ENCODE measurements at regions of chr7 and their contacts with region 1.

Region 1: GRCh38 chr7:42940985-42941847 is 9.0 kb downstream of the MRPL32 start:
- DNase-seq: peak; percentile 85
- H3K4me3 ChIP-seq: no peak overlapping the region
- H3K27ac ChIP-seq: no peak overlapping the region
- H3K4me1 ChIP-seq: no peaks in the 10 kb centered on the region
- H3K27me3 ChIP-seq: no peaks in the 10 kb centered on the region
- CTCF ChIP-seq: peak; percentile 92

Region 2: DNA sequence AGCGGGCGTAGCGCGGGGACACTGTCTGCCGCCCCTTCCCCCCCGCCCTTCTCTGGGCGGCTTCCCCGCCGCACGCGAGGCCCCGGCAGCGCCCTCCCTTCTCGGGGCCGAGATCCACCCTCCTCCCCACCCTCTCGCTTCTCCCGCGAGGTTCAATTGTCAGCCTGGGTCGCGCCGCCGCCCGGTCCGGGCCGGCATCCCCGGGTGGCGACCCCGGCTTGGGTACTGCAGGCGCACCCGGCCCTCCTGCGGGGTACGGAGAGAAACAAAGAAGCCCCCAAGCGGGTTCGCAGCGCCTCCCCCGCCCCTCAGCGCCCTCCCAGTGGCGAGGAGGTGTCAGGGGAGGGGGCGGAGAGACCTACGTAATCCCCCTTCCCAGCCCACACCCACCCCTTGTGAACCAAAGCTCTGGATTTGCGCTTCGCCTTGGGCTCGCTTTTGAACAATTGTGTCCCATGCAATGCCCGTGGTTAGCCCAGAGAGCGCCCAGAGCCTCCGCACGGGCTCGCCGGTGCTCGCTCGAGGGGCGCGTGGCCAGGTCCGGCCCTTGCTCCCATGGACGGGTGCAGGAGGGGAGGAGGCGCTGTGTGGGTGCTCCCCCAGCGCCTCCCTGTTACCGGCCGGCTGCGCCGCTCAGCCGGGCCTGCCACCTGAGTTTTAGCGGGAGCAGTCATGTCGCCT is 171.9 kb after region 1 on chr7:
- CTCF ChIA-PET with region 1: no interaction called
- POLR2A ChIA-PET with region 1: no interaction called
- intact Hi-C with region 1: loop called (anchors 2 kb)
- DNase-seq: peak; percentile 62
- H3K4me3 ChIP-seq: peak overlapping the region; percentile 56
- H3K27ac ChIP-seq: no peak overlapping the region
- H3K4me1 ChIP-seq: peaks cover 10% of the 10 kb centered on the region
- H3K27me3 ChIP-seq: peaks cover 60% of the 10 kb centered on the region
- CTCF ChIP-seq: no peak

Region 3: DNA sequence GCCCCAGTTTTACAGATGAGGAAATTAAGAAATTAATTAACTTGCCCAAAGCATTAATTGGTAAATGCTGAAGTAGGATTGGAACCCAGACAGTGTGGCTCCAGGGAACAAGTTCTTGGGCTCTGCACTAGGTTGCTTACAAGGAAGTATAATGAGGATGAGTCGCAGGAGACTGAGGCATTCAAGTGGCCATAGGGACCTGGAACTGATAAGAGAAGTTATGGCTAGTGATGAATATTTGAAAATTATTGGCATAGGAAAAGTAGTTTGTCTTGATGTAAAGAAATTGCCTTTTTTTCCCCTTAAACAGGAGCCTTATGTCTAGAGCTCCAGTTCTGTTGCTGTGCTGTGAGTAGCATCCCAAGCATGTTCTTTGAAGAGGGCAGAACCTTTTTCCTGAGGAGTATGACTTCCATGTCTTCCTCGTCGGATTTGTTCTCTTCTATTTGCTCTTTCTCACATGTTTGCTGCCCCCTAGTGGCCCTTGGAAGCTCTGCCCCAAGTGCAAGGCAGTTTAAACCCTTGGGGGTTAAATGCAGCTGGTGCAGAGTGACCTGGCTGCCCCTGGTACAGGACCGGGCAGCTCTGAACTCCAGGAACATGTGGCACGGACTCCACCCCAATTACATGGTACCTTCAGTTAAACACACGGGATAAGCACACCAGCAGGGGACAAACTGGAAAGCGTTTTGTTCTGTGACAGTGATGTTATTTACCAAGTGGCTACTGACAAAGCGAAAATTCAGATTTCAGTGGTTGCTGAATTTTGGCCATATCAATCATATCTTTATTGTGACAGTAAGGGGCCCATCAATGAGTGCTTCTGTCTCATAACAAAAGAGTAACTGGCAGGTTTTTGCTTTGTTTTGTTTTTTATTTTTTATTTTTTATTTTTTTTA is 320.0 kb after region 1 on chr7:
- CTCF ChIA-PET with region 1: interaction called, 6 read pairs
- POLR2A ChIA-PET with region 1: no interaction called
- intact Hi-C with region 1: loop called (anchors 1 kb)
- DNase-seq: peak; percentile 91
- H3K4me3 ChIP-seq: no peak overlapping the region
- H3K27ac ChIP-seq: no peak overlapping the region
- H3K4me1 ChIP-seq: no peaks in the 10 kb centered on the region
- H3K27me3 ChIP-seq: no peaks in the 10 kb centered on the region
- CTCF ChIP-seq: peak; percentile 96

Region 4: DNA sequence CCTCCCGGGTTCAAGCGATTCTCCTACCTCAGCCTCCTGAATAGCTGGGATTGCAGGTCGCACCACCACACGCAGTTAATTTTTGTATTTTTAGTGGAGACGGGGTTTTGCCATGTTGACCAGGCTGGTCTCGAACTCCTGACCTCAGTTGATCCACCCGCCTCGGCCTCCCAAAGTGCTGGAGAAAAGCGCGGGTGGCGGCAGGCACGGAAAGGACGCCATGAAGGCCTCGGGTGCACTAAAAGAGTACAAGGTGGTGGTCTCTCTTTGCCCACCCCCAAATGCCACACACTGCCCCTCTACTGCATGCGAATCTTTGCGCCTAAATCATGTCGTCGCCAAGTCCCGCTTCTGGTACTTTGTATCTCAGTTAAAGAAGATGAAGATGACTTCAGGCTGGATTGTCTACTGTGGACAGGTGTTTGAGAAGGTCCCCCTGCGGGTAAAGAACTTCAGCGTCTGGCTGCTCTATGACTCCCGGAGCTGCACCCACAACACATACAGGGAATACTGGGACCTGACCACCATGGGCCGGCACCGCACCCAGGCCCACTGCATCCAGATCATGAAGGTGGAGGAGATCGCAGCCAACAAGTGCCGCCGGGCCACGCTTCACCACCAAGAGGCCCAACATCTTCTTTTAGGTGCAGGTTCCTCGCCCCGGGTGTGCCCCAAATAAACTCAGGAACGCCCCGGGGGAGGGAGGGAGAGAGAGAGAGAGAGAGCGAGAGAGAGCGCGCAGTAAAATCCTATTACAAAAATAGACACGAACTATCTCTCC is 332.9 kb after region 1 on chr7:
- CTCF ChIA-PET with region 1: no interaction called
- POLR2A ChIA-PET with region 1: no interaction called
- intact Hi-C with region 1: no loop called
- DNase-seq: no peak
- H3K4me3 ChIP-seq: no peak overlapping the region
- H3K27ac ChIP-seq: no peak overlapping the region
- H3K4me1 ChIP-seq: no peaks in the 10 kb centered on the region
- H3K27me3 ChIP-seq: no peaks in the 10 kb centered on the region
- CTCF ChIP-seq: no peak

Region 5: DNA sequence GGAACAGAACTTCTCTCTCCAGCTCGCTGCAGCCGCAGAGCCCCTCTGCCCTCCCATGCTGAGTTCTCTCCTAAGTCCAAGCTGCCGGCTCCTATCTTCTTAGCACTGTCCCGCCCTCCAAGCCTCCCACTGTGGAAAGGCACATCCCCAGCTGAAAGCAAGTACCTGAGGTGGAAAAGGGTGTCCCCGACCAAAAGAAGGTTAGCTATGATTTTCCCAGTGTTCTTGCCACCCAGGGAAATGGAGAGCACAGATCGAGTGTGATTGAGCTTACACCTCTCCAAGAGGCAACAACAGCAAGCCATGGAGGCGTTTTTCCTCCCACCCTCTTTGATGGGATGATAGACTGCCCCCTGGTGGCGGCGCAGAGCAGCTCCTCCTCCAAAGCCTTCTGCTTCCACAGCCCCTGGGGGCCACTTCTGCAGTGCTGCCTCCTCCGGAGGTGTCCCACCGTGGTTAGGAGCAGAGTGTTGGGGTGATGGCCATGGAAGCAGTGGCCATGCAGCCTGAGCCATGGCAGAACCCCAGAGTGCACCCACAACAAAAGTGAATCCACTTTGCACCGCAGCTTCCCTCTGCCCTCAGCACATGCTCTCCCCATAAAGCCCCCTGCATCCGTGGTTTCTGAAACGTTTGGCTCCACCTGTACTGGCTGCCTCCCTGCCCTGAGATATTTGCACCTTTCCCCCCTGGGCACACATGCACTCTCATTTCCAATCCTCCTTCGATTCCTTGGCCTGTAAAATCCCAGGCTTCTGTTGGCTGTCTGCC is 498.6 kb after region 1 on chr7:
- CTCF ChIA-PET with region 1: interaction called, 3 read pairs
- POLR2A ChIA-PET with region 1: no interaction called
- intact Hi-C with region 1: loop called (anchors 2 kb)
- DNase-seq: peak; percentile 77
- H3K4me3 ChIP-seq: no peak overlapping the region
- H3K27ac ChIP-seq: no peak overlapping the region
- H3K4me1 ChIP-seq: no peaks in the 10 kb centered on the region
- H3K27me3 ChIP-seq: no peaks in the 10 kb centered on the region
- CTCF ChIP-seq: peak; percentile 91

Region 6: GRCh38 chr7:43700059-43700501 is 758.9 kb after region 1 on chr7:
- CTCF ChIA-PET with region 1: interaction called, 3 read pairs
- POLR2A ChIA-PET with region 1: no interaction called
- intact Hi-C with region 1: loop called (anchors 5 kb)
- DNase-seq: peak; percentile 78
- H3K4me3 ChIP-seq: no peak overlapping the region
- H3K27ac ChIP-seq: no peak overlapping the region
- H3K4me1 ChIP-seq: peaks cover 25% of the 10 kb centered on the region
- H3K27me3 ChIP-seq: no peaks in the 10 kb centered on the region
- CTCF ChIP-seq: peak; percentile 74

Region 7: DNA sequence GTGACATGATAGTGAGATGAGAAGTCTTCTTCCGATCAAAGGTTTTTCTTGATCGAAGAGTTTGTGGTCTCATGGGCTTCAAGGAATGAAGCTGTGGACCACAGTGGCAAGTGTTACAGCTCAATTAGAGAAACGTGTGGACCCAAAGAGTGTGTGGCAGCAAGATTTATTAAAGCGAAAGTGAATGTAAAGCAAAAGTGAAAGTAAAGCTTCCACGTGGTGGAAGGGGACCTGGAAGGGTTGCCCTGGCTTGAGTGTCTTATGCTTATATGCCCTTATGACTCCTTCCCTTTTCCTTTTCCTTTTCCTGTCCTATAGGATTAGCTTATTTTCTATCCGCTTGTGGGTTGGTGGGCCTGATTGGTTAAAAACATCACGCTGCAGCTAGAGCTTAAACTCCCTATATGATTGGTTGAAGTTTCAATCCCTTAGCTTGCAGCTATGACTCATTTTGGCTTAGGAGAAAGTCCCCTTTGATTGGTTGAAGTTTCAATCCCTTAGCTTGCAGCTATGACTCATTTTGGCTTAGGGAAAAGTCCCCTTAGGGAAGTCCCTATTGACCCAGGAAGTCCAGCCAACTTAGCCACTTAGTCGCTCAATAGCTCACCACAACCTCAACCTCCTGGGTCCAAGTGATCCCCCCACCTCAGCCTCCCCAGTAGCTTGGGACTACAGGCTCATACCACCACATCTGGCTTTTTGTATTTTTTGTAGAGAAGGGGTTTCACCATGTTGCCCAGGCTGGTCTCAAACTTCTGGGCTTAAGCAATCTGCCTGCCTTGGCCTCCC is 893.4 kb after region 1 on chr7:
- CTCF ChIA-PET with region 1: no interaction called
- POLR2A ChIA-PET with region 1: no interaction called
- intact Hi-C with region 1: loop called (anchors 5 kb)
- DNase-seq: peak; percentile 19
- H3K4me3 ChIP-seq: peak overlapping the region; percentile 30
- H3K27ac ChIP-seq: no peak overlapping the region
- H3K4me1 ChIP-seq: no peaks in the 10 kb centered on the region
- H3K27me3 ChIP-seq: no peaks in the 10 kb centered on the region
- CTCF ChIP-seq: no peak

Measured in A673 (cell line).